Activated B cell treated with CpG ODN at 0.5 μM for 24 hours (primary cell): ENCODE measurements at regions of chr3 and their contacts with region 1.

Region 1: GRCh38 chr3:9731206-9732079 is at the start of gene BRPF1:
- DNase-seq: peak; percentile 91
- ATAC-seq: peak; percentile 95
- H3K4me3 Mint-ChIP-seq: peak within 1 kb of the TSS; percentile 95
- H3K27ac Mint-ChIP-seq: peak within 1 kb of the TSS; percentile 99
- H3K4me1 Mint-ChIP-seq: peaks cover 48% of the 10 kb centered on the region
- H3K27me3 Mint-ChIP-seq: no peaks in the 10 kb centered on the region
- CTCF ChIP-seq: no peak
- total RNA-seq, gene BRPF1: 33.5 and 35.2 TPM in 2 replicates

Region 2: GRCh38 chr3:8663177-8664061 is 1068.0 kb before region 1 on chr3:
- CTCF ChIA-PET with region 1: no interaction called
- POLR2A ChIA-PET with region 1: no interaction called
- intact Hi-C with region 1: no loop called
- DNase-seq: no peak
- ATAC-seq: no peak
- H3K4me3 Mint-ChIP-seq: no peak overlapping the region
- H3K27ac Mint-ChIP-seq: no peak overlapping the region
- H3K4me1 Mint-ChIP-seq: peaks cover 31% of the 10 kb centered on the region
- H3K27me3 Mint-ChIP-seq: peaks cover 2% of the 10 kb centered on the region
- CTCF ChIP-seq: peak; percentile 51

Region 3: GRCh38 chr3:9362731-9363530 is 368.5 kb before region 1 on chr3 and contains the start of gene THUMPD3:
- CTCF ChIA-PET with region 1: no interaction called
- POLR2A ChIA-PET with region 1: no interaction called
- intact Hi-C with region 1: loop called (anchors 1 kb)
- DNase-seq: peak; percentile 92
- ATAC-seq: peak; percentile 96
- H3K4me3 Mint-ChIP-seq: peak within 1 kb of the TSS; percentile 99
- H3K27ac Mint-ChIP-seq: peak within 1 kb of the TSS; percentile 98
- H3K4me1 Mint-ChIP-seq: peaks cover 16% of the 10 kb centered on the region
- H3K27me3 Mint-ChIP-seq: no peaks in the 10 kb centered on the region
- CTCF ChIP-seq: no peak
- total RNA-seq, gene THUMPD3: 34.3 and 42.0 TPM in 2 replicates

Region 4: DNA sequence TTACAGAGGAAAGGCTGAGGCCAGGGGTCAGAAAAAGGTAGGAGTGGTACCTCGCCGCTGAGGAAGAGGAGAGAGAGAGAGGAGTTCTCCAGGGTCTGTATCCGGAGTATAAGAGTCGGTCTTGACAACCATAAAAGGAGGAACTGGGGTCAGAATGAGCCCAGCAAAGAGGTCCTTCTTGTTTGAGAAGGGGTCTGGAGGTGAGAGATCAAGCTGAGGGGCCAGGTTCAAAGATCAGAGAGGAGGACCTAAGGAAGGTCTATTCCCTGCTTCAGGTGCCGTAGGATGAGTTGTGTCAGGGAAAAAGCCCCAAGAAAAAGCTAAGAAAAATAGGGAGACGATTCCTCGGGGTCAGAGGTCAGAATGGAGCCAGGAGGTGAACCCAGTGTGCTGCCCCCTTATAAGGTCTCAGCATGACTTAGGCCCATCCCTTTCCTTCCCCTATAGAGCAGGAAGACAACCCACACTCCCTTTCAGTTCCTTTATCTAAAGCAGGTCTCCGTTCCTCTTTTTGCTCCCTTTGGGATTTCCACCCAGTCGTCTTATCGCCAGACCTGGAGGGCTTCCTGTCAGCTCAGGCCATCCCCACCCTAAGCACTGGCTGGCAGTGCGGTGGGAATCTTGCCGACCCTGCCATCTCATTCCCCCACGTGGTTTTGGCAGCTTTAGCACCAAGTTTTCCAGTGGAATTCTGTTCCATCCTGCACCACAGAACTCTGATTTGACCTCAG is 81.5 kb before region 1 on chr3:
- CTCF ChIA-PET with region 1: no interaction called
- POLR2A ChIA-PET with region 1: interaction called, 9 read pairs
- intact Hi-C with region 1: loop called (anchors 1 kb)
- DNase-seq: peak; percentile 25
- ATAC-seq: peak; percentile 59
- H3K4me3 Mint-ChIP-seq: peak overlapping the region; percentile 94
- H3K27ac Mint-ChIP-seq: peak overlapping the region; percentile 84
- H3K4me1 Mint-ChIP-seq: peaks cover 54% of the 10 kb centered on the region
- H3K27me3 Mint-ChIP-seq: no peaks in the 10 kb centered on the region
- CTCF ChIP-seq: no peak

Region 5: DNA sequence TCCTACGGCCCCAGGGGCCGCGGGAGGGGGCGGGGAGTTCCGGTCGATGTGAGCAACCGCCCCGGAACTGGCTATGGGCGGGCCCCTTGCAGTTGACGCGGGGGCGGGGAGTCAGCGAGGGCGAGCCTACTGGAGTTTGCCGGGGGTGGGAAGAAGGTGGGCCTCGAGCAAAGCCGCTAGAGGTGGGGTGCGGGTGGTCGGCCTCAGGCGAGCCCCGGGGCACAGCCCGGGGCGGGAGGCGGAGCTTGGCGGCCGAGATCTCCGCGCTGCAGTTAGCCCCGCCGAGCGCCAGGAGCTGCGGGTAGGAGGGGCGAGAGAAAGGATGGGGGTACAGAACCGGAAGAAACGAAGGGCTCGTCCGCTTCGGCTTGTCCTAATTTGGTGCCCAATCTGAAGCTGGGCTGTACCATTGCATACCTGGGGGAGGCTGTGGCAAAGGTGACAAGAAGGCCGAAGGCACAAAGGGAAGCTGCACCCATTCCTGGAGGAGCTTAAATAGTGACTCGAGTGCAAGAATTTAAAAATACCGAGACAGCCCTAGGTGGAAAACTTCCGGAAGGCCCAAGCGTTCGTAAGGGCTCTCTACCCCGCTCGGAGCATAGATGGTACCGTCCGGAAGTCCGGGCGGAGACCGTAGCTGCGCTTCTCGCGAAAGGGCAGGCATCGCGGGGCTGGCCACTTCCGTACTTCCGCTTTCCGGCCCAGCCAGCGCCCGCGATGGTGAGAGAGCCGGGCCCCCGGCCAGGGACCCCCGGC is 61.1 kb after region 1 on chr3 and contains the starts of genes ARPC4 and TADA3:
- CTCF ChIA-PET with region 1: no interaction called
- POLR2A ChIA-PET with region 1: interaction called, 40 read pairs
- intact Hi-C with region 1: loop called (anchors 1 kb)
- DNase-seq: peak; percentile 92
- ATAC-seq: peak; percentile 75
- H3K4me3 Mint-ChIP-seq: peak within 1 kb of the TSS; percentile 99
- H3K27ac Mint-ChIP-seq: peak within 1 kb of the TSS; percentile 100
- H3K4me1 Mint-ChIP-seq: peaks cover 67% of the 10 kb centered on the region
- H3K27me3 Mint-ChIP-seq: no peaks in the 10 kb centered on the region
- CTCF ChIP-seq: no peak
- total RNA-seq, gene ARPC4: 315 and 338 TPM in 2 replicates
- total RNA-seq, gene TADA3: 43.8 and 44.7 TPM in 2 replicates

Region 6: GRCh38 chr3:9890249-9891071 is 159.0 kb after region 1 on chr3 and contains the start of gene JAGN1:
- CTCF ChIA-PET with region 1: no interaction called
- POLR2A ChIA-PET with region 1: interaction called, 3 read pairs
- intact Hi-C with region 1: loop called (anchors 1 kb)
- DNase-seq: peak; percentile 85
- ATAC-seq: peak; percentile 86
- H3K4me3 Mint-ChIP-seq: peak within 1 kb of the TSS; percentile 94
- H3K27ac Mint-ChIP-seq: peak within 1 kb of the TSS; percentile 97
- H3K4me1 Mint-ChIP-seq: peaks cover 44% of the 10 kb centered on the region
- H3K27me3 Mint-ChIP-seq: no peaks in the 10 kb centered on the region
- CTCF ChIP-seq: no peak
- total RNA-seq, gene JAGN1: 30.9 and 32.1 TPM in 2 replicates

Region 7: DNA sequence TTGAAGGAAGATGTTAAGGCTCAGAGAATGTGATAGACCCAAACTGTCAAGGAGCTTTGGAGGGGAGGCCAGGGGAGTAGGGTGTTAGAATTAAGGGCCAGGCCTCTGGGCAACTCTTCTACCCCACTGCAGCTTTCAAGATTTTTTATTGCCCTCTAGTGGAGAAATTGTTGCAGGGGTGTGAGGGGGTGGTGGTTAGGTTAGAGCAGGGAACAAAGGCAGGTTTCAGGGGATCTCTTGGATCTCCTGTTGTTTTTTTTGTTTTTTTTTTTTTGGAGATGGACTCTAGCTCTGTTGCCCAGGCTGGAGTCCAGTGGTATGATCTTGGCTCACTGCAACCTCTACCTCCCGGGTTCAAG is 590.9 kb after region 1 on chr3:
- CTCF ChIA-PET with region 1: no interaction called
- POLR2A ChIA-PET with region 1: interaction called, 3 read pairs
- intact Hi-C with region 1: loop called (anchors 1 kb)
- DNase-seq: no peak
- ATAC-seq: no peak
- H3K4me3 Mint-ChIP-seq: no peak overlapping the region
- H3K27ac Mint-ChIP-seq: no peak overlapping the region
- H3K4me1 Mint-ChIP-seq: peaks cover 31% of the 10 kb centered on the region
- H3K27me3 Mint-ChIP-seq: peaks cover 9% of the 10 kb centered on the region
- CTCF ChIP-seq: no peak